CD4-positive, alpha-beta memory T cell (primary cell): ENCODE measurements at regions of chr14 and their contacts with region 1.

Region 1: DNA sequence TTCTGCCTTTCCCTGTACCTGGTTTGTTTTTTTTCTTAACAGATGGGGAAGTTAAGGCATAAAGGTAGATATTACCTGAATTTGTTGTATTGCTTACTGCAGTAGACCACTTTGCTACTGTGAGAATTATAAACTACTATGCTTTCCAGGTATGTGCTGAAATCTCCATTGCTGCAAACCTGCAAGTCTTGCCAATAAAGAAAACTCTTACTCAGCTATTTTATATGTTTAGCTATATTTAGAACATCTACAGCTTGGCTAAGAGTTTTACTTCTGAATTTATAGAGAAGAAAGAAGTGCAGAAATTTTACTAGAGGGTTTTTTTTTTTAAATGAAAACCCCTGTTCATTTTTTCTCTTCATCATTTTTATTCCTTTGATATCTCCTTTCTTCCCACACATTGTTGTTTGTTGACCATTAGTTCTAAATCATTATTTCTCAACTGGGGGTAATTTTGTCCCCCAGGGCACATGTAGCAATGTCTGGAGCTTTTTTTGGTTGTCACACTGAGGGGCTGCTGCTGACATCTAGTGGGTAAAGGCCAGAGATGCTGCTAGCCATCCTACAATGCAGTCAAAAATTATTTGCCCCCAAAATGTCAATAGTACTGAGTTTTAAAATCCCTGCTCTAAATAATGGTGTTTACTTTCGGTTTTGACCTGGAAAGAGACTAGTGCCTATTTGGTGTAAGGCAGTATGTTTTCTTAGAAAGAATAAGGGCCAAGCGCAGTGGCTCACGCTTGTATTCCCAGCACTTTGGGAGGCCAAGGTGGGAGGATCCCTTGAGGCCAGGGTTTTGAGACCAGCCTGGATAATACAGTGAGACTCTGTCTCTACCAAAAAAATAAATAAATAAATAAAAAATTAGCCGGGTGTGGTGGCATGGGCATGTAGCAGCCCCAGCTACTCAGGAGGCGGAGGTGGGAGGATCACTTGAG is 48.6 kb downstream of the PCNX1 start:
- DNase-seq: peak; percentile 55 to 62 (median 58)
- H3K4me3 ChIP-seq: no peak overlapping the region
- H3K4me3 Mint-ChIP-seq: peak overlapping the region in 3 of 8 donors; percentile 66 to 79 (median 74)
- H3K27ac ChIP-seq: no peak overlapping the region
- H3K27ac Mint-ChIP-seq: peak overlapping the region; percentile 15 to 81 (median 70)
- H3K4me1 ChIP-seq: peaks cover 51% of the 10 kb centered on the region
- H3K4me1 Mint-ChIP-seq: peaks cover 35 to 55% (median 42%) of the 10 kb centered on the region in 4 donors
- H3K27me3 ChIP-seq: no peaks in the 10 kb centered on the region
- H3K27me3 Mint-ChIP-seq: no peaks in the 10 kb centered on the region

Region 2: DNA sequence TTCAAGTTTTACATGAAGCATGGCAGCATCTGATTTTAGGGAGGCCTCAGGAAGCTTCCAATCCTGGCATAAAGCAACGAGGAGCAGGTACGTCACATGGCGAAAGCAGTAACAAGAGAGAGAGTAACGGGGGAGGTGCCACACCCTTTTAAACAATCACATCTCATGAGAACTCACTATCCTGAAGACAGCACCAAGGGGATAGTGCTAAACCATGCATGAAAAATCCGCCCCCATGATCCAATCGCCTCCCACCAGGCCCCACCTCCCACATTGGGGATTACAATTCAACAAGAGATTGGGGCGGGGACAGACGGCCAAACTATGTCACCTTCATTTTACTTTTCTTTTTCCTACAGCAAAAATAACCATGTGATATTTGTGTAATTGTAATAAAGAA is 139.3 kb before region 1 on chr14:
- CTCF ChIA-PET with region 1: interaction called, 94 read pairs
- POLR2A ChIA-PET with region 1: interaction called, 7 read pairs
- intact Hi-C with region 1: loop called (anchors 1 kb)
- DNase-seq: no peak
- H3K4me3 ChIP-seq: no peak overlapping the region
- H3K4me3 Mint-ChIP-seq: no peak overlapping the region
- H3K27ac ChIP-seq: no peak overlapping the region
- H3K27ac Mint-ChIP-seq: peak overlapping the region in 2 of 7 donors; percentile 23 to 78
- H3K4me1 ChIP-seq: peaks cover 11% of the 10 kb centered on the region
- H3K4me1 Mint-ChIP-seq: peaks cover 4 to 10% (median 6%) of the 10 kb centered on the region in 4 donors
- H3K27me3 ChIP-seq: no peaks in the 10 kb centered on the region
- H3K27me3 Mint-ChIP-seq: no peaks in the 10 kb centered on the region

Region 3: DNA sequence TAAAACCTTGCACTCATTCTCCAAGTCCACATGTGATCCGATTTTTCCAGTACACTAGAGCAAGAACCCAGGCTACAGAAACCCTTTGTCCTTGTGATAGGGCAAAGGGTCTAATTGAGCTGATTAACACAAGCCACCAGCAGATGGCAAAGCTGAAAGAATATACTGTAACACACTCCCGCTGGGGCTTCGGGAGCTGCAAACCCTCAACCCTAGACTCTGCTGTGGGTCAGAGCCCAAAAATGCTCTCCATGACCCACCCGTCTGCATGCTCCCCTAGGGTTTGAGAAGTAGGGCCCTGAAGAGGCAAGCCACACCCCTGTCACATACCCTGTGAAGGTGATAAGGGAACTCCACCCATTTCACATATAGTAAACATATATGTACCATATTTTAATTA is 82.2 kb before region 1 on chr14:
- CTCF ChIA-PET with region 1: interaction called, 51 read pairs
- POLR2A ChIA-PET with region 1: interaction called, 8 read pairs
- intact Hi-C with region 1: loop called (anchors 1 kb)
- DNase-seq: peak; percentile 31 to 43 (median 35)
- H3K4me3 ChIP-seq: no peak overlapping the region
- H3K4me3 Mint-ChIP-seq: peak overlapping the region in 5 of 8 donors; percentile 42 to 69 (median 61)
- H3K27ac ChIP-seq: no peak overlapping the region
- H3K27ac Mint-ChIP-seq: peak overlapping the region; percentile 68 to 90 (median 86)
- H3K4me1 ChIP-seq: peaks cover 23% of the 10 kb centered on the region
- H3K4me1 Mint-ChIP-seq: peaks cover 10 to 26% (median 21%) of the 10 kb centered on the region in 4 donors
- H3K27me3 ChIP-seq: no peaks in the 10 kb centered on the region
- H3K27me3 Mint-ChIP-seq: no peaks in the 10 kb centered on the region

Region 4: GRCh38 chr14:70934502-70935134 is 21.2 kb before region 1 on chr14:
- CTCF ChIA-PET with region 1: interaction called, 73 read pairs
- POLR2A ChIA-PET with region 1: interaction called, 7 read pairs
- intact Hi-C with region 1: no loop called
- DNase-seq: peak in 2 of 5 donors; percentile 22 to 29
- H3K4me3 ChIP-seq: peak overlapping the region in 1 of 2 donors; percentile 15
- H3K4me3 Mint-ChIP-seq: peak overlapping the region; percentile 57 to 84 (median 78)
- H3K27ac ChIP-seq: peak overlapping the region; percentile 27
- H3K27ac Mint-ChIP-seq: peak overlapping the region; percentile 70 to 92 (median 83)
- H3K4me1 ChIP-seq: peaks cover 54% of the 10 kb centered on the region
- H3K4me1 Mint-ChIP-seq: peaks cover 57 to 93% (median 71%) of the 10 kb centered on the region in 4 donors
- H3K27me3 ChIP-seq: no peaks in the 10 kb centered on the region
- H3K27me3 Mint-ChIP-seq: no peaks in the 10 kb centered on the region

Region 5: GRCh38 chr14:70972107-70972976 is 16.5 kb after region 1 on chr14:
- CTCF ChIA-PET with region 1: interaction called, 24 read pairs
- POLR2A ChIA-PET with region 1: interaction called, 7 read pairs
- intact Hi-C with region 1: loop called (anchors 2 kb)
- DNase-seq: peak; percentile 72 to 82 (median 78)
- H3K4me3 ChIP-seq: no peak overlapping the region
- H3K4me3 Mint-ChIP-seq: peak overlapping the region in 4 of 8 donors; percentile 20 to 63 (median 46)
- H3K27ac ChIP-seq: peak overlapping the region; percentile 4
- H3K27ac Mint-ChIP-seq: peak overlapping the region; percentile 67 to 90 (median 87)
- H3K4me1 ChIP-seq: peaks cover 48% of the 10 kb centered on the region
- H3K4me1 Mint-ChIP-seq: peaks cover 40 to 67% (median 52%) of the 10 kb centered on the region in 4 donors
- H3K27me3 ChIP-seq: no peaks in the 10 kb centered on the region
- H3K27me3 Mint-ChIP-seq: no peaks in the 10 kb centered on the region

Region 6: GRCh38 chr14:71130491-71131179 is 174.8 kb after region 1 on chr14:
- CTCF ChIA-PET with region 1: no interaction called
- POLR2A ChIA-PET with region 1: no interaction called
- intact Hi-C with region 1: no loop called
- DNase-seq: no peak
- H3K4me3 ChIP-seq: no peak overlapping the region
- H3K4me3 Mint-ChIP-seq: peak overlapping the region in 1 of 8 donors; percentile 11
- H3K27ac ChIP-seq: no peak overlapping the region
- H3K27ac Mint-ChIP-seq: peak overlapping the region in 1 of 7 donors; percentile 14
- H3K4me1 ChIP-seq: no peaks in the 10 kb centered on the region
- H3K4me1 Mint-ChIP-seq: peaks cover 0 to 11% (median 8%) of the 10 kb centered on the region in 4 donors
- H3K27me3 ChIP-seq: no peaks in the 10 kb centered on the region
- H3K27me3 Mint-ChIP-seq: no peaks in the 10 kb centered on the region